CD4-positive, alpha-beta memory T cell (primary cell): ENCODE measurements at regions of chr11 and their contacts with region 1.

Region 1: GRCh38 chr11:94493281-94494125 is at the starts of genes ANKRD49 and MRE11:
- DNase-seq: peak; percentile 97 to 98 (median 97)
- H3K4me3 ChIP-seq: peak within 1 kb of the TSS; percentile 90 to 94
- H3K4me3 Mint-ChIP-seq: peak within 1 kb of the TSS; percentile 94 to 98 (median 97)
- H3K27ac ChIP-seq: peak within 1 kb of the TSS; percentile 86
- H3K27ac Mint-ChIP-seq: peak within 1 kb of the TSS; percentile 91 to 99 (median 98)
- H3K4me1 ChIP-seq: peaks cover 36% of the 10 kb centered on the region
- H3K4me1 Mint-ChIP-seq: peaks cover 20 to 50% (median 28%) of the 10 kb centered on the region in 4 donors
- H3K27me3 ChIP-seq: no peaks in the 10 kb centered on the region
- H3K27me3 Mint-ChIP-seq: no peaks in the 10 kb centered on the region
- total RNA-seq, gene ANKRD49: 53.4 to 57.6 TPM
- total RNA-seq, gene MRE11: 43.3 to 43.4 TPM

Region 2: GRCh38 chr11:93543292-93543977 is 950.1 kb before region 1 on chr11 and contains the start of gene SMCO4:
- CTCF ChIA-PET with region 1: no interaction called
- POLR2A ChIA-PET with region 1: no interaction called
- intact Hi-C with region 1: loop called (anchors 5 kb)
- DNase-seq: peak; percentile 58 to 70 (median 59)
- H3K4me3 ChIP-seq: peak within 1 kb of the TSS; percentile 39 to 54
- H3K4me3 Mint-ChIP-seq: peak within 1 kb of the TSS; percentile 88 to 96 (median 92)
- H3K27ac ChIP-seq: peak within 1 kb of the TSS; percentile 41
- H3K27ac Mint-ChIP-seq: peak within 1 kb of the TSS; percentile 79 to 93 (median 88)
- H3K4me1 ChIP-seq: peaks cover 13% of the 10 kb centered on the region
- H3K4me1 Mint-ChIP-seq: peaks cover 21 to 37% (median 29%) of the 10 kb centered on the region in 4 donors
- H3K27me3 ChIP-seq: no peaks in the 10 kb centered on the region
- H3K27me3 Mint-ChIP-seq: peaks cover 0 to 3% of the 10 kb centered on the region in 2 donors
- total RNA-seq, gene SMCO4: 14.5 to 14.7 TPM

Region 3: GRCh38 chr11:93741094-93741881 is 752.2 kb before region 1 on chr11 and contains the starts of genes C11orf54 and TAF1D:
- CTCF ChIA-PET with region 1: no interaction called
- POLR2A ChIA-PET with region 1: interaction called, 7 read pairs
- intact Hi-C with region 1: loop called (anchors 5 kb)
- DNase-seq: peak; percentile 96 to 98 (median 97)
- H3K4me3 ChIP-seq: peak within 1 kb of the TSS; percentile 85 to 98
- H3K4me3 Mint-ChIP-seq: peak within 1 kb of the TSS; percentile 98 to 100 (median 100)
- H3K27ac ChIP-seq: peak within 1 kb of the TSS; percentile 93
- H3K27ac Mint-ChIP-seq: peak within 1 kb of the TSS; percentile 98 to 100 (median 99)
- H3K4me1 ChIP-seq: peaks cover 51% of the 10 kb centered on the region
- H3K4me1 Mint-ChIP-seq: peaks cover 41 to 77% (median 57%) of the 10 kb centered on the region in 4 donors
- H3K27me3 ChIP-seq: no peaks in the 10 kb centered on the region
- H3K27me3 Mint-ChIP-seq: no peaks in the 10 kb centered on the region
- total RNA-seq, gene C11orf54: 31.2 to 36.4 TPM
- total RNA-seq, gene TAF1D: 198 to 199 TPM

Region 4: GRCh38 chr11:94128746-94129511 is 364.6 kb before region 1 on chr11 and contains the start of gene PANX1:
- CTCF ChIA-PET with region 1: no interaction called
- POLR2A ChIA-PET with region 1: interaction called, 7 read pairs
- intact Hi-C with region 1: loop called (anchors 2 kb)
- DNase-seq: peak; percentile 72 to 81 (median 78)
- H3K4me3 ChIP-seq: peak within 1 kb of the TSS; percentile 89 to 96
- H3K4me3 Mint-ChIP-seq: peak within 1 kb of the TSS in 4 of 8 donors; percentile 90 to 94 (median 92)
- H3K27ac ChIP-seq: peak within 1 kb of the TSS; percentile 84
- H3K27ac Mint-ChIP-seq: peak within 1 kb of the TSS; percentile 87 to 98 (median 94)
- H3K4me1 ChIP-seq: peaks cover 52% of the 10 kb centered on the region
- H3K4me1 Mint-ChIP-seq: peaks cover 21 to 31% (median 26%) of the 10 kb centered on the region in 4 donors
- H3K27me3 ChIP-seq: no peaks in the 10 kb centered on the region
- H3K27me3 Mint-ChIP-seq: no peaks in the 10 kb centered on the region
- total RNA-seq, gene PANX1: 7.6 to 8.3 TPM

Region 5: DNA sequence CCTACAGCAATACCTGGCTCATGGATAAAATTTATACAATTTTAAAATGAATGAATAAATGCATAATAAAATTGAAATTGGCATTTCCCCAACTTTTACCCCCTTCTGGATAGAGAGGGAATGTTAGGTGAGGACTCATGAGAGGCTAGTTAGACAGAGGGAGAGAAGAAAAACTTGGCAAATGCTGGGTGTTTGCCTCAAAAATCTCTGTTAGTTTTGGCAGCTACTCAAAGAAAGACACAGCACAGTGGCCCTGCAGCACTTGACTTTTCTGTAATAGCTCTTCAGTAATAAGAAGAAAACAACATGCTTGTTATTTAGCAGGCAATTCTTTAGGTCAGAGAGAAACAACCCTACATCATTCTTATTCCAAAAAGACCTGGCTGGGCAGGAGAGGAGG is 209.8 kb before region 1 on chr11:
- CTCF ChIA-PET with region 1: no interaction called
- POLR2A ChIA-PET with region 1: no interaction called
- intact Hi-C with region 1: no loop called
- DNase-seq: no peak
- H3K4me3 ChIP-seq: no peak overlapping the region
- H3K4me3 Mint-ChIP-seq: no peak overlapping the region
- H3K27ac ChIP-seq: no peak overlapping the region
- H3K27ac Mint-ChIP-seq: no peak overlapping the region
- H3K4me1 ChIP-seq: no peaks in the 10 kb centered on the region
- H3K4me1 Mint-ChIP-seq: no peaks in the 10 kb centered on the region
- H3K27me3 ChIP-seq: no peaks in the 10 kb centered on the region
- H3K27me3 Mint-ChIP-seq: peaks cover 0 to 4% of the 10 kb centered on the region in 2 donors

Region 6: GRCh38 chr11:94511932-94512781 is 18.7 kb after region 1 on chr11 and contains the start of gene C11orf97:
- CTCF ChIA-PET with region 1: interaction called, 3 read pairs
- POLR2A ChIA-PET with region 1: interaction called, 10 read pairs
- intact Hi-C with region 1: no loop called
- DNase-seq: peak; percentile 36 to 46 (median 41)
- H3K4me3 ChIP-seq: peak within 1 kb of the TSS in 1 of 2 donors; percentile 51
- H3K4me3 Mint-ChIP-seq: peak within 1 kb of the TSS; percentile 73 to 85 (median 80)
- H3K27ac ChIP-seq: no peak within 1 kb of the TSS
- H3K27ac Mint-ChIP-seq: peak within 1 kb of the TSS in 3 of 7 donors; percentile 19 to 73 (median 47)
- H3K4me1 ChIP-seq: peaks cover 13% of the 10 kb centered on the region
- H3K4me1 Mint-ChIP-seq: peaks cover 10 to 17% (median 13%) of the 10 kb centered on the region in 4 donors
- H3K27me3 ChIP-seq: no peaks in the 10 kb centered on the region
- H3K27me3 Mint-ChIP-seq: peaks cover 9 to 12% of the 10 kb centered on the region in 2 donors
- total RNA-seq, gene C11orf97: not detected

Region 7: DNA sequence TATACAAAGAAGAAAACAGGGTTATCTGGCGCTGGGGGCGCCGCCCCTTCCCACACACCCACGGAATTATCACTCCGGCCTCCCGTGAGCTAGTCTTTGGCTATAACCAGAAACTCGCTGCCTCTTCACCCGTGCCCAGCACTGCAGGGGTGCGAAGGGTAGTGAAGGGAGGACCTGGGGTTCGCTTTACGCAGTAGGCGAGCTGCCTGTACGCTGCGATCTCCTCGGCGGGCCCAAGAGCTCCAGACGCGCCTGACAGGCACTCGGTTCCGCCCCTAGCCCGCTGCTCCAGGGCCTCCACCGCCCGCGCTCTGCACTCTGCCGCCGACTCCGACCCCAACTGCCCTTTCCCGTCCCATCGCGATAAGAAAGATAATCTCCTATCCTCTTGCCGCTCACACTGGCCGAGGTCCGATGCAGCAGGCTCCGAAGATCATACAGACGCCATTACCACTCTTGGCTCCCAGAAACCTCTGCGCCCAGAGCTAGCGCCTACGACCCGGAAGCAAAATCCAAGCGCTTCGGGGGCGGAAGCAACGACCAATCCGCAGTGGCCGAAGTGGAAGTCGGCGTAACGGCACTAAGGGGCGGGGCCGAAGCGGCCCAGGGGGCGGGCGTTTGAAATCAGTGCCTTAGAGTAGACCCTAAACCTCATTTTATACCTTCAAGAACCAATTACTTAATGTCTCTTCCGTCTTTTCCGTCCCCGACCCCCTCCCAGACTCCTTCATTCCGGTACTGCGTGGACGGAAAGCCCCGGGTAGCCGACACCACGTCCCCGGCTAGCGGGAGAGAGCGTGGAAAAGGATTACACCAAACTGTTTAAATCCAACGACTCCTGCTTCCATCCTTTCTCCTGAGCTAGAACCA is 479.8 kb after region 1 on chr11 and contains the starts of genes CWC15 and KDM4D:
- CTCF ChIA-PET with region 1: no interaction called
- POLR2A ChIA-PET with region 1: no interaction called
- intact Hi-C with region 1: loop called (anchors 2 kb)
- DNase-seq: peak; percentile 91 to 96 (median 93)
- H3K4me3 ChIP-seq: peak within 1 kb of the TSS; percentile 61 to 95
- H3K4me3 Mint-ChIP-seq: peak within 1 kb of the TSS; percentile 94 to 100 (median 98)
- H3K27ac ChIP-seq: peak within 1 kb of the TSS; percentile 92
- H3K27ac Mint-ChIP-seq: peak within 1 kb of the TSS; percentile 84 to 100 (median 98)
- H3K4me1 ChIP-seq: peaks cover 16% of the 10 kb centered on the region
- H3K4me1 Mint-ChIP-seq: peaks cover 14 to 35% (median 25%) of the 10 kb centered on the region in 4 donors
- H3K27me3 ChIP-seq: no peaks in the 10 kb centered on the region
- H3K27me3 Mint-ChIP-seq: no peaks in the 10 kb centered on the region
- total RNA-seq, gene CWC15: 62.7 to 69.4 TPM
- total RNA-seq, gene KDM4D: 0.32 to 0.39 TPM

Region 8: DNA sequence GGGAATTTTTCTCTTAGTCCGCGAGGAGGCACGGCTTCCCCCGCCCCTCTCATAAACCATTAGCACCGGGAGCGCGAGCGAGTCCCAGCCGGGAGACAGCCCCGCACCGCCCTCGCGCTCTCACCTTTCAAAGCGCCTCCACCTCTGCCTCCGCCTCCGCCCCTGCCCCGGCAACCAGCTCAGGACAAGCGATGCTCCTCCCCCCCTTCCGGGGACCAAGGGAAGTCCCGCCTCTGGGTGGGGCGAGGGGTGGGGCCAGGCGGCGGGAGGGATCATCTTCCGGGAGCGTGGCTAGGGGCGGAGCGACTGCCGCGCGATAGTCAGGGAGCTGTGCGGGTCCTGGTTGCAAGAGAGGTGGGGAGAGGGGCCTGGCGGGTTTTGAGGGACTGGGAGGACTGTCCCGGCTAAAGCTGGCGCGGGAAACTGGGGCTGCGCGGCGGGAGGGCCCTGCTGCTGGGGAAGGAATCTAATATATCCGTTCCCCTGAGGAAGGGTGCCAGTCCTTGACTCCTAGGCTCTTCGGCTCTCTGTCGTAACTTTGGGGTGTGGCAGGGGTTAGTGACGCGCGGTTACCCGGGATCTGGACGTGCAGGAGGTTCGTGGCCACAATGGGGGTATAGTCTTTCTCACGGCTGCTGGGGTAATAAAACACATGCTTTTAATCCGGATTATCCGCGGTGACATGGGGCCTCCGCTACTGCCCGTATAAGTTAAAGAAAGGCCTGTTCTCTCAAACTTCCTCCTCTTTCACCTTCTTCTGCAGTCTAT is 1896.4 kb after region 1 on chr11 and contains the starts of genes CCDC82 and JRKL:
- CTCF ChIA-PET with region 1: no interaction called
- POLR2A ChIA-PET with region 1: no interaction called
- intact Hi-C with region 1: loop called (anchors 5 kb)
- DNase-seq: peak; percentile 97 to 99 (median 98)
- H3K4me3 ChIP-seq: peak within 1 kb of the TSS; percentile 85 to 93
- H3K4me3 Mint-ChIP-seq: peak within 1 kb of the TSS; percentile 92 to 98 (median 94)
- H3K27ac ChIP-seq: peak within 1 kb of the TSS; percentile 79
- H3K27ac Mint-ChIP-seq: peak within 1 kb of the TSS; percentile 91 to 98 (median 97)
- H3K4me1 ChIP-seq: peaks cover 36% of the 10 kb centered on the region
- H3K4me1 Mint-ChIP-seq: peaks cover 22 to 59% (median 37%) of the 10 kb centered on the region in 4 donors
- H3K27me3 ChIP-seq: no peaks in the 10 kb centered on the region
- H3K27me3 Mint-ChIP-seq: no peaks in the 10 kb centered on the region
- total RNA-seq, gene CCDC82: 37.9 to 42.8 TPM
- total RNA-seq, gene JRKL: 18.3 to 20.0 TPM